BJ (cell line): ENCODE measurements at regions of chr7 and their contacts with region 1.

Region 1: GRCh38 chr7:7321720-7322128 is 139.4 kb downstream of the C1GALT1 start:
- DNase-seq: no peak
- H3K4me3 ChIP-seq: no peak overlapping the region
- H3K27me3 ChIP-seq: no peaks in the 10 kb centered on the region
- CTCF ChIP-seq: no peak

Region 2: GRCh38 chr7:7283396-7283795 is 38.3 kb before region 1 on chr7:
- CTCF ChIA-PET with region 1: no interaction called
- POLR2A ChIA-PET with region 1: no interaction called
- DNase-seq: no peak
- H3K4me3 ChIP-seq: no peak overlapping the region
- H3K27me3 ChIP-seq: no peaks in the 10 kb centered on the region
- CTCF ChIP-seq: no peak

Region 3: DNA sequence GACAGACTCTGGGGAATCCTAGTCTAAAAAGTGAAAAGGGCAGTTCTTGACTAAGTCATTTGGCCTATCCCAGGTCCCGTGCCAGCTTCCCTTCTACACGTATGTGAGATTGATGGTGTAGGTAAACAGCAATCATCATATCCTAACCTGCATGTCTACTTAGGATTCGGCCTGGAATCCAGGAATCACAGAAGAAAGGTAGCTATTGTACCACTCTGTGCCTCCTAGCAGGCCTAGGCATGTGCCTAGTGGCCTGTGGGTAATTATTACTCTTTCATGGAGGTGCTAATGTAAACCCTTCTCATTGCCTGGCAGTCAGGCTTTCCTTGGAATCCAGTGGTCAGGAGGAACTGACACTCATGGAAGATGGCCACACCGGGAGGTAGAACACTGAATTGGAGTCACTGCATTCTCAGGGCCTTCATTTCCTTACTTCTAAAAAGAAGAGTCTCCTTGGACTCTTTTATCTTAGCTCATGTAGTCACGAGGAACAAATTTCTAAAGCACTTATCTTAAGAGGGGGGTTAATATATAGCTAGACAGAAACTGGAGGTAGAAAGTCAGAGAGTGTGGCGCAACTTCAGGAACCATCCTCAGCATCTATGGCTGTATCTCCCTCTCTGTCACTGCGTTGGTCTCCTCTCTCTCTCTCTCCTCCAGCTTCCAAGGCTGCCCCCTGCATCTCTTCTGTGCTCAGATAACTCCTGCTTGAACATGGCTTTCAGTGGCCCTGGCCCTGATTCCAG is 16.8 kb before region 1 on chr7:
- CTCF ChIA-PET with region 1: interaction called, 3 read pairs
- POLR2A ChIA-PET with region 1: interaction called, 11 read pairs
- DNase-seq: no peak
- H3K4me3 ChIP-seq: no peak overlapping the region
- H3K27me3 ChIP-seq: no peaks in the 10 kb centered on the region
- CTCF ChIP-seq: no peak